A549 (cell line): ENCODE measurements at regions of chr20 and their contacts with region 1.

Region 1: DNA sequence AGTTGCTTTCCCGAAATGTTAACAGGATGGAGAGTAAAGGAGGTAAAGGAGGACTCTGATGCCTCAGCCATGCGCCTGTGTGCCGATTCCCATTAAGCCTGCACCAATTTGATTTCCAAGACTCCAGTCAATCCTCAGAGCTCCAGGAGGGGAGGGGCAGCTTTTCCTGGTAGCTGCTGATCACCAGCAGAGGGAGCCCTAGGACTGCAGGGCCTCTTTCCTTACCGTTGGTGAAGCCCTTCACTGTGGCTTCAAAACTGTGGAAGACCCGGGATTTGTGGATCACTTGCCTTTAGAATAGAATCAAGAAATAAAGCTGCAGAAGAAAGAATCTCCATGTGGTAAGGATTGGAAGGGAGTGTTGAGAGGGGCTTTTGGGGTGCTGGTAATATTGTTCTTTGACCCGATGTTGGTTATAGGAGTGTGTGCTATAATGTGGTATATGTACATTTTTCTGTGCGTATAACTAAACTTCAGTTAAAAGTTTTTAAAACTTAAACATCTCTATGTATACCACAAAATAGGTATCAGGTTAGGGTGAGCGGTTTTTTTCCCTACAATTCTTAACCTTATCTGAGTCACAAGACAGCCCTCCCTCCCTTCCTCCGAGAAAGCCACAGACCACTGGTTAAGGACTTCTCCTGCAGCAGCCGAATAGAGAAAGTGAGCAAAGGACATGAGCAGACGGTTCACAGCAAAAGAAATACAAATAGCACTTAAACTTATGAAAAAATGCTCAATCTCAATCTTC is 6.9 kb upstream of the OSER1 start:
- DNase-seq: peak; percentile 69 to 80
- ATAC-seq: peak; percentile 78 to 90
- H3K4me3 ChIP-seq: no peak overlapping the region
- H3K27ac ChIP-seq: no peak overlapping the region
- H3K4me1 ChIP-seq: no peaks in the 10 kb centered on the region; the same call in 2 of the 3 replicates
- CTCF ChIP-seq: peak; percentile 97
- EP300 ChIP-seq: no peak
- POLR2A ChIP-seq: no peak
- RAD21 ChIP-seq: peak; percentile 96 to 99

Region 2: GRCh38 chr20:44231713-44232468 is 14.4 kb after region 1 on chr20:
- CTCF ChIA-PET with region 1: interaction called, 96 read pairs
- POLR2A ChIA-PET with region 1: no interaction called
- DNase-seq: peak in 1 of 2 experiments; percentile 21
- ATAC-seq: peak; percentile 47 to 50; a peak in 4 of 6 replicates
- H3K4me3 ChIP-seq: no peak overlapping the region
- H3K27ac ChIP-seq: no peak overlapping the region
- H3K4me1 ChIP-seq: peaks cover 10% of the 10 kb centered on the region
- CTCF ChIP-seq: no peak
- EP300 ChIP-seq: no peak
- POLR2A ChIP-seq: no peak
- RAD21 ChIP-seq: no peak

Region 3: GRCh38 chr20:44294674-44295073 is 77.2 kb after region 1 on chr20:
- CTCF ChIA-PET with region 1: interaction called, 13 read pairs
- POLR2A ChIA-PET with region 1: no interaction called
- DNase-seq: no peak
- ATAC-seq: no peak
- H3K4me3 ChIP-seq: no peak overlapping the region
- H3K27ac ChIP-seq: no peak overlapping the region
- H3K4me1 ChIP-seq: no peaks in the 10 kb centered on the region
- CTCF ChIP-seq: no peak
- EP300 ChIP-seq: no peak
- POLR2A ChIP-seq: no peak
- RAD21 ChIP-seq: no peak

Region 4: GRCh38 chr20:44326391-44327159 is 109.1 kb after region 1 on chr20:
- CTCF ChIA-PET with region 1: interaction called, 80 read pairs
- POLR2A ChIA-PET with region 1: no interaction called
- DNase-seq: no peak
- ATAC-seq: peak in 1 of 2 experiments; percentile 28; a peak in 1 of 6 replicates
- H3K4me3 ChIP-seq: peak overlapping the region; percentile 24
- H3K27ac ChIP-seq: peak overlapping the region; percentile 61 to 78
- H3K4me1 ChIP-seq: peaks cover 14% of the 10 kb centered on the region
- CTCF ChIP-seq: no peak; the same call in 2 of the 3 replicates
- EP300 ChIP-seq: no peak
- POLR2A ChIP-seq: no peak
- RAD21 ChIP-seq: no peak

Region 5: GRCh38 chr20:44388466-44389023 is 171.0 kb after region 1 on chr20:
- CTCF ChIA-PET with region 1: interaction called, 241 read pairs
- POLR2A ChIA-PET with region 1: no interaction called
- DNase-seq: peak; percentile 69 to 84
- ATAC-seq: peak; percentile 77 to 87
- H3K4me3 ChIP-seq: no peak overlapping the region
- H3K27ac ChIP-seq: peak overlapping the region; percentile 55 to 73
- H3K4me1 ChIP-seq: peaks cover 64% of the 10 kb centered on the region
- CTCF ChIP-seq: peak; percentile 93
- EP300 ChIP-seq: no peak
- POLR2A ChIP-seq: no peak
- RAD21 ChIP-seq: peak; percentile 91 to 95

Region 6: GRCh38 chr20:44460795-44461141 is 243.3 kb after region 1 on chr20:
- CTCF ChIA-PET with region 1: interaction called, 440 read pairs
- POLR2A ChIA-PET with region 1: no interaction called
- DNase-seq: peak; percentile 45 to 49
- ATAC-seq: peak; percentile 72 to 87; a peak in 5 of 6 replicates
- H3K4me3 ChIP-seq: no peak overlapping the region
- H3K27ac ChIP-seq: peak overlapping the region; percentile 2 to 49; a peak in 2 of 6 replicates
- H3K4me1 ChIP-seq: peaks cover 10% of the 10 kb centered on the region; the same call in 1 of the 3 replicates
- CTCF ChIP-seq: peak; percentile 81
- EP300 ChIP-seq: no peak
- POLR2A ChIP-seq: no peak
- RAD21 ChIP-seq: peak; percentile 82 to 84